AG04449 (cell line): ENCODE measurements at regions of chr15 and their contacts with region 1.

Region 1: GRCh38 chr15:71800835-71801745 is 9.3 kb upstream of the NR2E3 start:
- DNase-seq: peak; percentile 73
- H3K4me3 ChIP-seq: no peak overlapping the region
- CTCF ChIP-seq: peak; percentile 64

Region 2: DNA sequence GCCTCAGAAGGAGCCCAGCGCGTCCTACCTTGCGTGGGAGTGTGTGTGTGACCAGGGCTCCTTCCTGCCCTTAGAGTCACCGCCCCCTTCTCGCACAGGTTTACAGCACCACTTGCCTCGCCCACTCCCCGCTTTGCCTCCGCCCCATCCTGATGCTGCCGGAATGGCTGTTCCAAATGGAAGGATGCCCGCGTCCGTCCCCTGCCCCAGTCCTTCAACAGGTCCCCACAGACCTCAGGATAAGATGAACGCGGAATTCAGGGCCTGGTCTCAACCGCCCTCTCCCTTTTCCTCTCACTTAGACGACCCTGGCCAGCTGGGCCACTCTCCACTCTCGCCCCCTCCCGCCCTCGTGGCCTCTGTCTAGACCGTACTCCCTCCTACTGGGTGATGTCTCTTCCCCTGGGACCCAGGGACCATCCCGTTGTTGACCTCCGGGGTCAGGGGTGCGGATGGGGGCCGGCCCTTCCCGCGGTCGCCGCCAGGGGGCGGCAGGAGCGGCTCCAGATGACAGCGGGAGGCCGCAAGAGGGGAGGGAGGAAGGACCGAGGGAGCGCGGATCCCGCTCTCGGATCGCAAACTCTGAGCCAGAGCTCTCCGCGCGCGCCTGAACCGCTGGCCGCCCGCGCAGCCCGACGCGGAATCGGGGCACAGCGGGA is 686.1 kb before region 1 on chr15 and contains the start of gene THSD4:
- CTCF ChIA-PET with region 1: interaction called, 13 read pairs
- POLR2A ChIA-PET with region 1: no interaction called
- DNase-seq: no peak
- H3K4me3 ChIP-seq: peak within 1 kb of the TSS; percentile 64
- CTCF ChIP-seq: peak; percentile 98

Region 3: GRCh38 chr15:71448688-71449114 is 352.4 kb before region 1 on chr15:
- CTCF ChIA-PET with region 1: interaction called, 38 read pairs
- POLR2A ChIA-PET with region 1: no interaction called
- DNase-seq: no peak
- H3K4me3 ChIP-seq: no peak overlapping the region
- CTCF ChIP-seq: peak; percentile 75

Region 4: GRCh38 chr15:71698030-71698429 is 103.1 kb before region 1 on chr15:
- CTCF ChIA-PET with region 1: no interaction called
- POLR2A ChIA-PET with region 1: no interaction called
- DNase-seq: no peak
- H3K4me3 ChIP-seq: no peak overlapping the region
- CTCF ChIP-seq: no peak

Region 5: DNA sequence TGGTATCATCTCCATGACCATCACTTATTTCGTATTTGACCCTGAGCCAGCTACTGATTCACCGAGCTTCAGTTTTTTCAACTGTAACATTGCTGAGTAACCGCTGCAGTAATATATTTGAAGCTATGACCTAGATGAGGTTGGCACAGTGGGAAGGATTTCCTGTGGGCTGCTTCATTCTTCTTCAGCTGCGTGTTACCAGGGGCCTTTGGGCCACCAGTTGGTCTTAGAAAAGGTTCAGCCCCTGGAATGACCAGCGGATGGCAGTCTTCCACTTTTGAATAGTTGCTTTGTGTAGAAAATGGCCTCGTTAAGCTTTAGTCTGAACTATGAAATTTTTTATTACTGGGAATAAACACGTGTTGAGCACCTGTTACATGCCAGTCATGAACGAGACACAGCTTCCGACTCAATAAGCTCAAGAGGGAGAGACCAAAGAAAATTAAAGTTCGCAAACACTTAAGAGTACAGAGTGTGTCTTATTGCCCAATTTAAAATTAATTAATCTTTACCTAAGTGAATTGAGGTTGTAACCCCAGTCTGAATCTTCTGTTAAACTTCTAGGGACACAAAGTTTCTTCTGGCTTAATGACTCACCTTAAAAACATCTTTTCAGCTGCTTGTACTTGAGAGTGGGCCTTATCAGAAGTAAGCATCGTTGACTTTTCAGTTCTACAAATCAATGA is 48.3 kb before region 1 on chr15:
- CTCF ChIA-PET with region 1: interaction called, 171 read pairs
- POLR2A ChIA-PET with region 1: no interaction called
- DNase-seq: peak; percentile 92
- H3K4me3 ChIP-seq: no peak overlapping the region
- CTCF ChIP-seq: peak; percentile 62

Region 6: GRCh38 chr15:71780115-71780976 is 20.7 kb before region 1 on chr15:
- CTCF ChIA-PET with region 1: interaction called, 28 read pairs
- POLR2A ChIA-PET with region 1: no interaction called
- DNase-seq: no peak
- H3K4me3 ChIP-seq: no peak overlapping the region
- CTCF ChIP-seq: peak; percentile 61

Region 7: GRCh38 chr15:72155635-72156616 is 354.8 kb after region 1 on chr15:
- CTCF ChIA-PET with region 1: interaction called, 25 read pairs
- POLR2A ChIA-PET with region 1: no interaction called
- DNase-seq: peak; percentile 29
- H3K4me3 ChIP-seq: peak overlapping the region; percentile 64
- CTCF ChIP-seq: peak; percentile 86